Ascending aorta (tissue), 2 donors: ENCODE measurements at regions of chr16 and their contacts with region 1.

Region 1: GRCh38 chr16:30526823-30527635 is 663 bp upstream of the ZNF768 start:
- DNase-seq: peak; percentile 90 to 99
- H3K4me3 ChIP-seq: peak overlapping the region; percentile 86 to 92
- H3K27ac ChIP-seq: peak overlapping the region; percentile 93 to 96
- H3K4me1 ChIP-seq: peaks cover 0 to 6% of the 10 kb centered on the region in 2 donors
- H3K27me3 ChIP-seq: no peaks in the 10 kb centered on the region
- CTCF ChIP-seq: peak; percentile 14 to 31 (median 28)

Region 2: GRCh38 chr16:30355144-30355894 is 171.7 kb before region 1 on chr16 and contains the start of gene CD2BP2:
- intact Hi-C with region 1: loop called (anchors 5 kb)
- DNase-seq: peak; percentile 84 to 99
- H3K4me3 ChIP-seq: peak within 1 kb of the TSS; percentile 72 to 87
- H3K27ac ChIP-seq: peak within 1 kb of the TSS; percentile 95 to 98
- H3K4me1 ChIP-seq: peaks cover 10 to 42% of the 10 kb centered on the region in 2 donors
- H3K27me3 ChIP-seq: no peaks in the 10 kb centered on the region
- CTCF ChIP-seq: peak in 1 of 3 experiments; percentile 5
- total RNA-seq, gene CD2BP2: 15.1 TPM

Region 3: DNA sequence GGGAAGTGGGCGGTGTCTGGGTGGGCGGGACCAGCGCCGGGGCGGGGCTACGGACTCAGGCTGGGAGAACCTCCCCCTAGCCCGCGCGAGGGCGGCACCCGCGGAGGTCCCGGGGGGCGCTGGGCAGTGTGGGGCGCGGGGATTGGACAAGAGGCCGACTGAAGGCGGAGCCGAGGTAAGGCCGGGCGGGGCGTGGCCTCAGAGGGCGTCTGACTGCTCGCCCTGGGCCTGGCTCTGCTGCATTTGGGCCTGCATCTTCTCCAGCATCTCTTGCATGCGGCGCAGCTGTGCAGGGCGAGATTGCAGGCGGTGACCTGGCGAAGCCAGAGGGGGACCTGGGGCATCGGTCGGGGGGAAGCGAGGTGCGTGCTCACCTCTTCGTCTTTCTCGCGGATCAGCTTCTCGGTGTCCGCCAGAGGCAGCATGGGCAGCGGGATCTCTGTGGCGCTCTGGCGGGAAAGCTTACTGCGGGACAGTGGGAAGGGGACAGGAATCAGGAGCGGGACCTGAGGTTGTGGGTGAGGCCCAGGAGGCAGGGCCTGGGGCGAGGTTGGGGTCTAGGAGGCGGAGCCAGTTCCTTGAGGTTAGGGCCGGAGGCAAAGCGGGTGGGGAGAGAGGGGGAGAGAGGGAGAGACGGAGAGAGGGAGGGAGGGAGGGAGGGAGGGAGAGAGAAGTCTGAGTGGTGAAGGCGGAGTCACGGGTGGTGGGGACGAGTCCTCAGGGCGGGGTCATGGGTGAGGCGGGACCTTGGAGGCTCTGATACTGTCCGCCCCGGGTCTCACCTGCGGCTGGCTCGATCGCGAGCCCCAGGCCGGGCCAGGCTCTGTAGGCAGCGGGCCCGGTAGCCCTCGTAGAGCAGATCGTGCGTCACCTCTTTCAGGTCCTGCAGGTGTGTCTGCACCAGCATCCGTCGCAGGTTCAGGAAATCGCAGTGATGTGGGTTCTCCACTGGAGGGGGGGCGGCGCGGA is 148.5 kb before region 1 on chr16:
- intact Hi-C with region 1: loop called (anchors 2 kb)
- DNase-seq: peak; percentile 96 to 100
- H3K4me3 ChIP-seq: peak overlapping the region; percentile 67 to 88
- H3K27ac ChIP-seq: peak overlapping the region; percentile 99 to 100
- H3K4me1 ChIP-seq: peaks cover 8 to 9% of the 10 kb centered on the region in 2 donors
- H3K27me3 ChIP-seq: no peaks in the 10 kb centered on the region
- CTCF ChIP-seq: peak in 2 of 3 experiments; percentile 6 to 28

Region 4: DNA sequence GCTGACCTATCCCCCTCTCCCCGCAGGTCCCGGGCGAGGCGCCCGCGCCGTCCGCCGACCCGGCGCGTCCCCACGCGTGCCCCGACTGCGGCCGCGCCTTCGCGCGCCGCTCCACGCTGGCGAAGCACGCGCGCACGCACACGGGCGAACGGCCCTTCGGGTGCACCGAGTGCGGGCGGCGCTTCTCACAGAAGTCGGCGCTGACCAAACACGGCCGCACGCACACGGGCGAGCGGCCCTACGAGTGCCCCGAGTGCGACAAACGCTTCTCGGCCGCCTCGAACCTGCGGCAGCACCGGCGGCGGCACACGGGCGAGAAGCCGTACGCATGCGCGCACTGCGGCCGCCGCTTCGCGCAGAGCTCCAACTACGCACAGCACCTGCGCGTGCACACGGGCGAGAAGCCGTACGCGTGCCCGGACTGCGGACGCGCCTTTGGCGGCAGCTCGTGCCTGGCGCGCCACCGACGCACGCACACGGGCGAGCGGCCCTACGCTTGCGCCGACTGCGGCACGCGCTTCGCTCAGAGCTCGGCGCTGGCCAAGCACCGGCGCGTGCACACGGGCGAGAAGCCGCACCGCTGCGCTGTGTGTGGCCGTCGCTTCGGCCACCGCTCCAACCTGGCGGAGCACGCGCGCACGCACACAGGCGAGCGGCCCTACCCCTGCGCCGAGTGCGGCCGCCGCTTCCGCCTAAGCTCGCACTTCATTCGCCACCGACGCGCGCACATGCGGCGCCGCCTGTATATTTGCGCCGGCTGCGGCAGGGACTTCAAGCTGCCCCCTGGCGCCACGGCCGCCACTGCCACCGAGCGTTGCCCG is 109.3 kb before region 1 on chr16:
- intact Hi-C with region 1: no loop called
- DNase-seq: peak in 1 of 2 donors; percentile 86
- H3K4me3 ChIP-seq: peak overlapping the region; percentile 70 to 83
- H3K27ac ChIP-seq: peak overlapping the region; percentile 62 to 69
- H3K4me1 ChIP-seq: peaks cover 7 to 9% of the 10 kb centered on the region in 2 donors
- H3K27me3 ChIP-seq: no peaks in the 10 kb centered on the region
- CTCF ChIP-seq: peak in 1 of 3 experiments; percentile 29

Region 5: GRCh38 chr16:30445408-30446202 is 81.4 kb before region 1 on chr16 and contains the start of gene SEPHS2:
- intact Hi-C with region 1: loop called (anchors 2 kb)
- DNase-seq: peak; percentile 99 to 100
- H3K4me3 ChIP-seq: peak within 1 kb of the TSS; percentile 79 to 97
- H3K27ac ChIP-seq: peak within 1 kb of the TSS; percentile 92 to 97
- H3K4me1 ChIP-seq: peaks cover 5 to 16% of the 10 kb centered on the region in 2 donors
- H3K27me3 ChIP-seq: no peaks in the 10 kb centered on the region
- CTCF ChIP-seq: peak; percentile 41 to 59 (median 42)
- total RNA-seq, gene SEPHS2: 22.8 TPM

Region 6: GRCh38 chr16:30509081-30509765 is 17.8 kb before region 1 on chr16:
- intact Hi-C with region 1: no loop called
- DNase-seq: no peak
- H3K4me3 ChIP-seq: no peak overlapping the region
- H3K27ac ChIP-seq: no peak overlapping the region
- H3K4me1 ChIP-seq: no peaks in the 10 kb centered on the region
- H3K27me3 ChIP-seq: no peaks in the 10 kb centered on the region
- CTCF ChIP-seq: no peak

Region 7: GRCh38 chr16:30585400-30586189 is 58.6 kb after region 1 on chr16 and contains the start of gene ZNF785:
- intact Hi-C with region 1: loop called (anchors 2 kb)
- DNase-seq: peak; percentile 97 to 99
- H3K4me3 ChIP-seq: peak within 1 kb of the TSS; percentile 82 to 90
- H3K27ac ChIP-seq: peak within 1 kb of the TSS; percentile 92 to 93
- H3K4me1 ChIP-seq: peaks cover 0 to 16% of the 10 kb centered on the region in 2 donors
- H3K27me3 ChIP-seq: no peaks in the 10 kb centered on the region
- CTCF ChIP-seq: peak in 2 of 3 experiments; percentile 17 to 23
- total RNA-seq, gene ZNF785: 12.1 TPM

Region 8: DNA sequence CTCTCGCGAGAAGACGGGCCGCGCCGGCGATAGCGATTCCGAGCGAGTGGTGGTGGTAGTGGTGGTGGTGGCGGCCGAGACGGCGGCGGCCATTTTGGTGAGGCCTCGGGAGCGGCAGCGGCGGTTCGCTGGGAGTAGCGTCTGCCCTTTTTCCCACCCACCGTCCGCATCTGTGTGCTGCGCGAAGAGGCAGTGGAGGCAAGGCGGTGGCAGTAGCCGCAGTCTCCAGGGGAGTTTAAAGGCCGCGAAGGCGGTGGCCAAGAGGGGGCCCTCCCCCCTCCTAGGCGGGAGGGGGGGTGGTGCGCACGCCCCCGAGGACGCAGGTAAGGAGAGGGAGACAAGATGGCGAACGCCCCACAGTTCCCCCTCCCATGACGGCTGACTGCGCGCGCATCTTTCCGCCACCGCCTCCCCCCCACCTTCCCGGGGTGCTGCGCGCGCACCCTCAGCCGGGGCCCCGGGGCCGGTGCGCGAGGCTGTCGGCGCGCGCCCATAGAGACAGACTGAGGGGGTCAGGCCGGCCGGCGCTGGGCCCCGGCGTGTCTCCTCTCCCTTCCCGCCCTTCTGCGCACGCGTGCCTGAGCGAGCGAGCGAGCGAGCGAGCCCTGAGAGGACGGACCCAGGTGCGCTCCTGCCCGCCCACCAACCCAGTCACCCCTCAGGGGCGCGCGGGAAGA is 171.2 kb after region 1 on chr16:
- intact Hi-C with region 1: loop called (anchors 2 kb)
- DNase-seq: peak; percentile 94 to 99
- H3K4me3 ChIP-seq: peak overlapping the region; percentile 89 to 90
- H3K27ac ChIP-seq: peak overlapping the region; percentile 97 to 100
- H3K4me1 ChIP-seq: peaks cover 8 to 16% of the 10 kb centered on the region in 2 donors
- H3K27me3 ChIP-seq: no peaks in the 10 kb centered on the region
- CTCF ChIP-seq: no peak

Region 9: GRCh38 chr16:30710971-30711370 is 183.9 kb after region 1 on chr16:
- intact Hi-C with region 1: no loop called
- DNase-seq: no peak
- H3K4me3 ChIP-seq: no peak overlapping the region
- H3K27ac ChIP-seq: no peak overlapping the region
- H3K4me1 ChIP-seq: no peaks in the 10 kb centered on the region
- H3K27me3 ChIP-seq: no peaks in the 10 kb centered on the region
- CTCF ChIP-seq: no peak